Activated T-helper 2 cell treated with anti-CD3 and anti-CD28 coated beads, Interferon-gamma antibody, Interleukin-2, Interleukin-4, amounts not matched to agents 10 μg/mL and 5 μg/mL and 100 μg/mL, durations not matched to agents 14 hours and 24 hours and 36 hours (primary cell): ENCODE measurements at regions of chr11 and their contacts with region 1.

Region 1: DNA sequence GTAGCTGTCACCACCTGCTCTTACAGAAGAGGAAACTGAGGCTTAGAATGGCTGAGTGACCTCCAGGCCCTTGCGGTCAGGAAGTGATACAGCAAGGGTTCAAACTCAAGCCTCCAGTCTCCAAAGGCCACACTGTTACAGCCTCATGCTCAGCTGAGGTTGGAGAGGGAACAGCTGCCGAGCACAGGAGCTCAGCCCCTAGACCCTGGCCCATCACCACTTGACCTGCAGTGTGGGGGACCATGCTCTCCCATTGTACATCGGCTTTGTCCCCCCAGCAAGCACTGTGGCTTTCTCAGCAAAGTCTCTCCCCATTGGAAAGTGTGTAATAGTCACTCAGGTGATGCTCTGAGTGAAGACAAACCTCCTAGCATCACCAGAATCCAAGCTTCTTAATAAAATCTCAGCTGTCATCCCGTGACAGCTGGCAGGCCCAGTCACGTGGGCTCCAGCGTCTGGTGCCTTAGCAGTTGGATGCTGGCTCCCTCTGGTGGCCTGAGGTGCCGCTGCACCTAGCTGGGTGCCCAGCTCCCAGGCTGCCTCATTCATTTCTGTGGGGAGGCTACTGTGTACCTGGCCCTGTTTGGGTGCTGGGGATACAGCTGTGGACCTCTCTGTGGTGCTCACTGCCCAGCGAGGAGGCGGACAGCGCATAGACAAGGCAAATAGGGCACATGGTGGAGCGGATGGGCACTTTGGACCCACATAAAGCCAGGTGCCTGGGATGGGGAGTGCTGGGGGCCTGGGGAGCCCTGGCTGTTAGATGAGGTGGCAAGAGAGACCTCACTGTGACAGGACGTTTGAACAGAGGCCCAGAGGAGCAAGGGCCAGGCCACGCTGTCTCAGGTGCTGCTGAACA is 19.1 kb upstream of the MYRF start:
- DNase-seq: peak; percentile 75
- H3K4me3 Mint-ChIP-seq: no peak overlapping the region
- H3K27ac Mint-ChIP-seq: no peak overlapping the region
- H3K4me1 Mint-ChIP-seq: peaks cover 4% of the 10 kb centered on the region
- H3K27me3 Mint-ChIP-seq: no peaks in the 10 kb centered on the region

Region 2: GRCh38 chr11:61609980-61610366 is 123.4 kb before region 1 on chr11:
- intact Hi-C with region 1: no loop called
- DNase-seq: no peak
- H3K4me3 Mint-ChIP-seq: no peak overlapping the region
- H3K27ac Mint-ChIP-seq: no peak overlapping the region
- H3K4me1 Mint-ChIP-seq: no peaks in the 10 kb centered on the region
- H3K27me3 Mint-ChIP-seq: peaks cover 9% of the 10 kb centered on the region

Region 3: DNA sequence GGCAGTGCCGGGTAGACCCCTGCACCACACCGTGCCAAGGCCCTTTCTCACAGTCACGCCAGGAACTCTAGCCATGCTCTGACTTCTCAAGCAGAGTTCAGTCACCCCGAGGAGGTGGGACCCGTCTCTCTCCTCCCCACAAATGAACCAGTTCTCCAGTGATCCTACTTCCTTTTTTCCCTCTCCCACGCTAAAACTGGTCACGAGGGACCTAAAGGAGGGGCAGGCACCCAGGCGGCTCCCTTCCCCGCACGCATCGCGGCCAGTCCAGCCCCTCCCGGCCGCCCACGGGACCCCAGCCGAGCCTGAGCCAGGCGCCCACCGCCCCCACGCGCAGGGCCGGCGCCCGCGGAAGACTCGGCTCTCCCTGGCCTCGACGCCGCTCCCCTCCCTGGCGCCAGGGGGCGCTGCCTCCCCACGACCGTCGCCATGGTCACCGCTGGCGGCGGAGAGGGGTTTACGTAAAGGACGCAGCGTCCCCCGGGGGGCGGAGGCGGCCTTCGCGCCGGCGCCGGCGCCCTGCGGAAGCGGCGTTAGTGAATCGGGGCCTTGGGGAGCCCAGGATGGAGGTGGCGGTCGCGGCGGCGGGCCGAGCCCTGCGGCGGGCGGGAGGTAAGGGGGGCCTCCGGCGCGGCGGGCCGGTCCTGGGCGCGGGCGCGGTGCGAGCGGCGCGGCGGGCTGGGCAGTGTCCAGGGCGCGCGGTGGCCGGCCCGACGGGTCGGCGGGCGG is 53.3 kb before region 1 on chr11 and contains the start of gene DAGLA:
- intact Hi-C with region 1: loop called (anchors 1 kb)
- DNase-seq: peak; percentile 64
- H3K4me3 Mint-ChIP-seq: peak within 1 kb of the TSS; percentile 40
- H3K27ac Mint-ChIP-seq: no peak within 1 kb of the TSS
- H3K4me1 Mint-ChIP-seq: no peaks in the 10 kb centered on the region
- H3K27me3 Mint-ChIP-seq: peaks cover 12% of the 10 kb centered on the region
- total RNA-seq, gene DAGLA: 0.07 TPM in 2 replicates

Region 4: GRCh38 chr11:61816736-61817455 is 83.5 kb after region 1 on chr11 and contains the start of gene FADS1:
- intact Hi-C with region 1: no loop called
- DNase-seq: peak; percentile 84
- H3K4me3 Mint-ChIP-seq: peak within 1 kb of the TSS; percentile 99
- H3K27ac Mint-ChIP-seq: peak within 1 kb of the TSS; percentile 96
- H3K4me1 Mint-ChIP-seq: peaks cover 20% of the 10 kb centered on the region
- H3K27me3 Mint-ChIP-seq: no peaks in the 10 kb centered on the region
- total RNA-seq, gene FADS1: 114 and 116 TPM in 2 replicates